Naive thymus-derived CD4-positive, alpha-beta T cell (primary cell): ENCODE measurements at regions of chr5 and their contacts with region 1.

Region 1: GRCh38 chr5:44808435-44809214 is at the start of gene MRPS30:
- DNase-seq: peak; percentile 65 to 96 (median 94)
- ATAC-seq: peak; percentile 98
- H3K4me3 ChIP-seq: peak within 1 kb of the TSS; percentile 85
- H3K4me3 Mint-ChIP-seq: peak within 1 kb of the TSS; percentile 86 to 98 (median 96)
- H3K27ac ChIP-seq: peak within 1 kb of the TSS; percentile 81
- H3K27ac Mint-ChIP-seq: peak within 1 kb of the TSS; percentile 84 to 98 (median 95)
- H3K4me1 ChIP-seq: peaks cover 0 to 20% of the 10 kb centered on the region in 2 donors
- H3K4me1 Mint-ChIP-seq: peaks cover 12 to 53% (median 36%) of the 10 kb centered on the region in 7 donors
- H3K27me3 ChIP-seq: no peaks in the 10 kb centered on the region
- H3K27me3 Mint-ChIP-seq: peaks cover 0 to 5% (median 3%) of the 10 kb centered on the region in 5 donors
- total RNA-seq, gene MRPS30: 31.1 to 61.0 (median 47.1) TPM

Region 2: DNA sequence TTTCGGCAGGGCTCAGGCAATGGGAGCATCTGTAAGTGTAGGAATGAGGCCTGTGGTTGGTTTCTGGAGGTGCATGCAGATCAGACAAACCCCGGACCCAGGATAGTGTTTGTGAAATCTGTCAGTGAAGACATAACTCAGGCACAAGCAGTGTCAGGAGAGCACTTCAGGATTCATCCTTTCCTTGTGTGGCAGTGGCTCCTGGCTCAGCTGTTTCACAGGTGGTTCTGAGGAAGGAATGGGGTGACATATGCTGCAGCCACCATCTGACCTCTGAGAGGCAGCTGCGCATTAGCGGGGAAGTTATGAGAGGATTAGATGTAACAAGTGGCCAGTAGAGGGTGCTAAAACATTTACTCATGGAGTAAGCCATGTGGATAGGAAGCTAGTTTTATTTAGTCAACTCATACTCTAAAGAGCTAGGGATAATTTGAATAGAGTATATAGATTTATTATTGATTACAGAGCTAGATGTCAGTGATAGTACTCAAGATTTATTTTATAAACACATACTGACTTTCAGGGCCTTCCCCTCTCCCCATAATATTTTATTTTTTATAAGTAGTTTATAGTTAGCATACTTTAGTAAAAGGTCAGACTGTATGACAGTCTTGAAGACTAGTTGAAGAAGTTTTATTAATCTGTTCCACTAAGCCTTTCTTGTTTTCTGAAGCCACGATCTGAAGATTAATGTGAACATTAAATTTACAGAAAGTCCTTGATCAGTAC is 1177.3 kb before region 1 on chr5:
- CTCF ChIA-PET with region 1: no interaction called
- POLR2A ChIA-PET with region 1: no interaction called
- intact Hi-C with region 1: loop called in 1 of 2 experiments (anchors 10 kb)
- DNase-seq: peak in 7 of 9 donors; percentile 8 to 51 (median 34)
- ATAC-seq: peak; percentile 94
- H3K4me3 ChIP-seq: no peak overlapping the region
- H3K4me3 Mint-ChIP-seq: no peak overlapping the region
- H3K27ac ChIP-seq: no peak overlapping the region
- H3K27ac Mint-ChIP-seq: peak overlapping the region in 2 of 9 donors; percentile 26 to 43
- H3K4me1 ChIP-seq: no peaks in the 10 kb centered on the region
- H3K4me1 Mint-ChIP-seq: peaks cover 10 to 54% (median 33%) of the 10 kb centered on the region in 7 donors
- H3K27me3 ChIP-seq: no peaks in the 10 kb centered on the region
- H3K27me3 Mint-ChIP-seq: no peaks in the 10 kb centered on the region

Region 3: GRCh38 chr5:44875661-44876605 is 67.3 kb after region 1 on chr5:
- CTCF ChIA-PET with region 1: no interaction called
- POLR2A ChIA-PET with region 1: interaction called, 4 read pairs
- intact Hi-C with region 1: loop called (anchors 2 kb)
- DNase-seq: peak in 5 of 9 donors; percentile 3 to 22 (median 11)
- ATAC-seq: peak; percentile 63
- H3K4me3 ChIP-seq: no peak overlapping the region
- H3K4me3 Mint-ChIP-seq: peak overlapping the region in 7 of 10 donors; percentile 12 to 69 (median 45)
- H3K27ac ChIP-seq: no peak overlapping the region
- H3K27ac Mint-ChIP-seq: peak overlapping the region; percentile 21 to 95 (median 62)
- H3K4me1 ChIP-seq: no peaks in the 10 kb centered on the region
- H3K4me1 Mint-ChIP-seq: peaks cover 0 to 23% (median 14%) of the 10 kb centered on the region in 7 donors
- H3K27me3 ChIP-seq: no peaks in the 10 kb centered on the region
- H3K27me3 Mint-ChIP-seq: no peaks in the 10 kb centered on the region

Region 4: DNA sequence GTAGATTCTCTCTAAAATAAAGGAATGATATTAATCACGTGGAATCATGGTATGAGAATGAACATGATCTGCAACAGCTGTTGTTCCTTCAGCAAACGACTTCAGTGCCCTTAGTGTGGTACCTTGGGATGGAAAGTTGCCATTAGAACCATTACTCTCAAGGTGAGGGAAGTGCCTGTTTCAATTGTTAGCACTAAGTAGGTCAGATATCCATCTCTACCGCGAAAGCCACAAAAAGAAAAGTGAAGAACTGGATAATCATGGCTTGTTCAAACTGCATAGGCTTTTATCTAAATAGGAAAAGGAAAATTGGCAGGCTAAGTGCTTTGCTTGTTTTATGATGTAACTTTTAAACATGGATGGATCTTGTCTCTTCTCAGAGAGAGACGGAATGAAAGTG is 380.9 kb after region 1 on chr5:
- CTCF ChIA-PET with region 1: no interaction called
- POLR2A ChIA-PET with region 1: no interaction called
- intact Hi-C with region 1: no loop called
- DNase-seq: no peak
- ATAC-seq: no peak
- H3K4me3 ChIP-seq: no peak overlapping the region
- H3K4me3 Mint-ChIP-seq: no peak overlapping the region
- H3K27ac ChIP-seq: no peak overlapping the region
- H3K27ac Mint-ChIP-seq: no peak overlapping the region
- H3K4me1 ChIP-seq: no peaks in the 10 kb centered on the region
- H3K4me1 Mint-ChIP-seq: no peaks in the 10 kb centered on the region
- H3K27me3 ChIP-seq: no peaks in the 10 kb centered on the region
- H3K27me3 Mint-ChIP-seq: no peaks in the 10 kb centered on the region